Activated naive CD4-positive, alpha-beta T cell treated with anti-CD3 and anti-CD28 coated beads, Interleukin-2, amount 10 ng/mL, durations not matched to agents 7 days and 5 days (primary cell): ENCODE measurements at regions of chr5 and their contacts with region 1.

Region 1: DNA sequence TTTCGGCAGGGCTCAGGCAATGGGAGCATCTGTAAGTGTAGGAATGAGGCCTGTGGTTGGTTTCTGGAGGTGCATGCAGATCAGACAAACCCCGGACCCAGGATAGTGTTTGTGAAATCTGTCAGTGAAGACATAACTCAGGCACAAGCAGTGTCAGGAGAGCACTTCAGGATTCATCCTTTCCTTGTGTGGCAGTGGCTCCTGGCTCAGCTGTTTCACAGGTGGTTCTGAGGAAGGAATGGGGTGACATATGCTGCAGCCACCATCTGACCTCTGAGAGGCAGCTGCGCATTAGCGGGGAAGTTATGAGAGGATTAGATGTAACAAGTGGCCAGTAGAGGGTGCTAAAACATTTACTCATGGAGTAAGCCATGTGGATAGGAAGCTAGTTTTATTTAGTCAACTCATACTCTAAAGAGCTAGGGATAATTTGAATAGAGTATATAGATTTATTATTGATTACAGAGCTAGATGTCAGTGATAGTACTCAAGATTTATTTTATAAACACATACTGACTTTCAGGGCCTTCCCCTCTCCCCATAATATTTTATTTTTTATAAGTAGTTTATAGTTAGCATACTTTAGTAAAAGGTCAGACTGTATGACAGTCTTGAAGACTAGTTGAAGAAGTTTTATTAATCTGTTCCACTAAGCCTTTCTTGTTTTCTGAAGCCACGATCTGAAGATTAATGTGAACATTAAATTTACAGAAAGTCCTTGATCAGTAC is 28.4 kb downstream of the NNT start:
- DNase-seq: peak; percentile 30
- H3K4me3 Mint-ChIP-seq: no peak overlapping the region
- H3K27ac Mint-ChIP-seq: no peak overlapping the region
- H3K4me1 Mint-ChIP-seq: peaks cover 2% of the 10 kb centered on the region
- H3K27me3 Mint-ChIP-seq: no peaks in the 10 kb centered on the region

Region 2: DNA sequence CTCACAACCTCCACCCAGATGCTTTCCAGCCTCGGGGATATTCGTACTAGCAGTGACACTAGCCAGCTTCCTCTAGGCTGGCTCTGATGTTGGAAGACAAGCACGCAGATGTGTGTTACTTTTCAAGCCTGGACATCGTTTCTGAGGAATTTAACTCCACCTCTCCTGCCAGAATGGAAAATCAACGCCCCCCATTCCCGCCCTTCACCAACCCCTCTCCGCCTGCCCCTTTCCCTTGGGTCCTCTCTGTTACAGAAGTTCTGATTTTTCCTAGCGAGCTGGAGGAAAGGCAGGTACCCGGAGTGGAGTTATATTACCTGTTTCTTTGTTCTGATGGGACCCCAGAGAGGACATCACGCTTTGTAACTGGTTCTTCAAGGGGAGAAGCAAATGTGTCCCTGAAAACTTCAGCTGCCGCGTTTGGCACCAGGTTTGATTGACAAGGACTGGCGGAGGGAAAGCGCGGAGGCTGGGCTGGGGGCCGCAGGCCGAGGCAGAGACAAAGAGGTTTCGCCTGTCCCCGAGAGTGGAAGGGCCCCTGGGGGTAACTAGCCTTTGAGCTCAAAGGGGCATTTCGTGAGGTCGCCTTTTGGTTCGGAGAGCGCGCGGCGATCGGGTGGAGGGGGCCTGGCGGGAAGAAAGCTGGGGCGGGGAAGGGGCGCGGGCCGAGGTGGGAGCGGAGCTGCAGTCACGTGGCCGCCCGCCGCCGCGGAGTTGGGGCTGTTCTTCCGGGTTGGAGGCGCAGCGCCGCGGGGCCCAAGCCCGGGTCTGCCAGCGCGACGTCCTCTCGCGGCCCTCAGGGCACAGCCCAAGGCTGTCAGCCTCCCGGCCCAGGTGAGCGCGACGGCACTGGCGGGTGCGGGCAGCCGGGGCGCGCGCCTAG is 28.6 kb before region 1 on chr5 and contains the start of gene NNT:
- CTCF ChIA-PET with region 1: interaction called, 12 read pairs
- DNase-seq: peak; percentile 89
- H3K4me3 Mint-ChIP-seq: peak within 1 kb of the TSS; percentile 87
- H3K27ac Mint-ChIP-seq: peak within 1 kb of the TSS; percentile 89
- H3K4me1 Mint-ChIP-seq: peaks cover 46% of the 10 kb centered on the region
- H3K27me3 Mint-ChIP-seq: no peaks in the 10 kb centered on the region

Region 3: GRCh38 chr5:43649256-43649655 is 17.9 kb after region 1 on chr5:
- CTCF ChIA-PET with region 1: interaction called, 19 read pairs
- DNase-seq: no peak
- H3K4me3 Mint-ChIP-seq: no peak overlapping the region
- H3K27ac Mint-ChIP-seq: no peak overlapping the region
- H3K4me1 Mint-ChIP-seq: no peaks in the 10 kb centered on the region
- H3K27me3 Mint-ChIP-seq: no peaks in the 10 kb centered on the region

Region 4: DNA sequence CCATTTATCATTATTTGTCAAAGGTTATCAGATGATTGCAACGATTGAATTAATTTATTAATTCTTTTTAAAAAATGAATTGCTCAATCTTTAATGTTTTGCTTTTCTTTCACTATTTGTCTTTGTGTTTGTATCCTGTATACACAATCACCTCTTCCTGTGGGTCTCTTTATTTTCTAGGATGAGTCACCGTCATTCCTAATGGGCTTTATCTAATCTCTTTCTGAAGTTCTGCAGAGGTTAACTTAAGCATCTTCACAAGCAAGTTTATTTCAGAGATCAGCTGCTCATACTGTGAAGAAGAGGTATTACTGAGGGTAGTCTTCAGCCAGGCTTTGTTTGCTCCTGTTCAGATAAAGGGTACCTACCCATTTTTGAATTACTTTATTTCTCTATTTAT is 295.6 kb after region 1 on chr5:
- CTCF ChIA-PET with region 1: no interaction called
- DNase-seq: no peak
- H3K4me3 Mint-ChIP-seq: no peak overlapping the region
- H3K27ac Mint-ChIP-seq: no peak overlapping the region
- H3K4me1 Mint-ChIP-seq: no peaks in the 10 kb centered on the region
- H3K27me3 Mint-ChIP-seq: no peaks in the 10 kb centered on the region